ENCODE measurements at regions of chr6 and their contacts with region 1.

Region 1: DNA sequence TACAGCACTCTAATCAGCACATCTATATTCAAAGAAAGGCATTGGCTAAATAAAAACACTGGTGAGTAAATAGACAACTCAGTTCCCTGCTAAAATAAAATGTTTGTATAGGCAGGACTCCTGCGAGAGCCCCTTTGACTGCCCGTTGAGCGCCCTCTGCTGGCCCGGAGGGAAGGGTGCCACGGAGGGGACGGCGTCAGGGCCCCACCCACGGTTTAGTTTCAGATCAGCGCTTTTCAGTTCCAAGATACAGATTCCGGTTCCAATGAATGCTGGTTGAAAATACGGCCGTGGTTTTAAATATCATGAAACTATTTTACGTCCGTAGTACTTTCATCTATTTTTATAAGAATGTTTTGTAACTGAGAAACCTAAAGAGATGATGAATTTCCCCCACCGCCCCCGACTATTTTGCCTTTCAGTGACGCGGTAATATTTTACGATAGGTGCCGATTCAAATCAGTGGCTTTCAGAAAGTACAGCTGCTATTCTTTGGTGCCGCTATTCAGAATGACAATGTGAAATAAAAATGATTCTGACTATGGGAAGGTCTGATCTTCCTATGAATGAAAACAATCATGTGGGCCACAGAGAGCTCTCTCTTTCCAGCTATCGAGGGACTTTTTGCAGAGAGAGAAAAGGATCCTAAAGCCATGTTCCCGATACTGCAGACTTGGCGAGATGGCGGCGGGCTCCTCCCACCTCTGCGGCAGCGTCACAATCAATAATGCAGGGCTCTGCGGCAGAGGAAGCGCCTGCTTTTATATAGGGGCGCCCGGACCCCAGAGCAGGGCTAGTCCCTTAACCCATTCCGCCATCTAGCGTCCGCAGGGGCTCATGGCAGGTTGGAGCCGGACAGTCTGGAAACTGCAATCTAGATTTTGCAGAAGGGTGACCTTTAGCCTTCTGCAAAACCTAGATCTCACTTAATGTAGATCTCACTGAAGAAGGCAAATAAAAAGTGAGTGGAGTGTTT is 10.6 kb upstream of the CCN6 start:
- DNase-seq: peak; percentile 84 to 95 (median 91)
- ATAC-seq: peak; percentile 89 to 95 (median 90)
- H3K4me3 ChIP-seq: peak overlapping the region; percentile 63 to 80
- H3K4me3 Mint-ChIP-seq: peak overlapping the region; percentile 92 to 96 (median 96)
- H3K27ac ChIP-seq: peak overlapping the region; percentile 94
- H3K27ac Mint-ChIP-seq: peak overlapping the region; percentile 97 to 99
- H3K4me1 ChIP-seq: peaks cover 1 to 4% of the 10 kb centered on the region in 2 experiments
- H3K4me1 Mint-ChIP-seq: peaks cover 24 to 32% (median 28%) of the 10 kb centered on the region in 3 donors
- H3K27me3 ChIP-seq: no peaks in the 10 kb centered on the region
- H3K27me3 Mint-ChIP-seq: no peaks in the 10 kb centered on the region

Region 2: DNA sequence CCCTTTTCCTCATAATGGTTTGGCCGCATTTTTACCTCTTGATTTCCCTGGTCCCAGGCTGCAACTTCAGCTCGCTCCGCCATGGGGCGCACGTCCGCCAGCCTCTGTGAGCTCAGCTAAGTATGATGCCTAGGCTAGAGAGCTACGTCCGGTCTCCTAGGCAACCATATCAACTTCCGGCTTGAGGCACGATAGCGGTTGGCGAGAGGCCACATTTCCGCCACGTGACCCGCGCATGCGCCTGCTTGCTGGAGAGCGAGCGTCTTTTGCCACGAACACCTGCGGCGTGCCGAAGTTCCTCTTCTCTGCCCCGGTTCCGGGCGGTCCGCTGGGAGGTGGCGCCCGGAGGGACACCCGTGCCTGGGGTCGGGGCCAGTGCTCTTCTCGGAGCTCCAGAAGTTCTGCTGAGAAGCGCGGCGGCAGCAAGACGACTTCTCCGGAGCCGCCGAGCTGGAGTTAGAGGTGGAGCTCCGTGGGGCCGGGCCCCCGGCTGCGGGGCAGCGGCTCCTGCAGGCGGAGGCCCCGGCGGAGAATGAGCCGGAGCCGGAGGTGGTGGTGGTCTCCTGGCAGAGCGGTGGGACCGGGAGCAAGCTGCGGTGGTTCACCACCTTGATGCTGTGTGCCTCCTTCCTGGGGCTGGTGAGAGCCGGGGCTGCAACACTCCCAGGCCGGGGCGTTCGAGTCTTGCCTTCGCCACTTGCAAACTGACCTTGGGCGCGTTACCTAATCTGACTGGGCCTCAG is 784.1 kb before region 1 on chr6:
- CTCF ChIA-PET with region 1: interaction called, 8 to 32 read pairs
- POLR2A ChIA-PET with region 1: interaction called in 1 of 2 experiments, 5 read pairs
- DNase-seq: peak; percentile 95 to 100 (median 99)
- ATAC-seq: peak; percentile 96 to 98 (median 96)
- H3K4me3 ChIP-seq: peak overlapping the region; percentile 70 to 74
- H3K4me3 Mint-ChIP-seq: peak overlapping the region; percentile 66 to 85 (median 81)
- H3K27ac ChIP-seq: peak overlapping the region; percentile 85
- H3K27ac Mint-ChIP-seq: peak overlapping the region; percentile 83 to 84
- H3K4me1 ChIP-seq: peaks cover 5 to 21% of the 10 kb centered on the region in 2 experiments
- H3K4me1 Mint-ChIP-seq: peaks cover 30 to 38% (median 34%) of the 10 kb centered on the region in 3 donors
- H3K27me3 ChIP-seq: peaks cover 0 to 2% of the 10 kb centered on the region in 2 experiments
- H3K27me3 Mint-ChIP-seq: peaks cover 0 to 8% of the 10 kb centered on the region in 2 donors

Region 3: DNA sequence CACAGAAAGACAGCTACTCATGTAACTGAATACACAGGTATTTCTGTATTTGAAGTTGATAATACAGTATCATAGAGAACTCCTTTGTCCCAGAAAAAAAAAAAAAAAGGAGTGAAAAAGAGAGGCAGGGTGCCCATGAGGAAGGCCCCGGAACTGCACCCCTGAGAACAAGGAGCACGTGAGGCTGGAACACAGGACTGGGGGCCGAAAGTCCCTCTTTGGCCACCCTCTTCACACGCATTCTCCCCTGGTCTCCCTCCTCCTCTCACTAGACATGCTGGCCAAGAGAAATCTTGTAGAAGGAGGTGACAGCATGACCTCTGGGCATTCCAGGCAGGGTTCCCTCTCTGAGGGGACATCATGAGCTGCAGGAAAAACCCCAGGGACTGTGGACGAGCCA is 374.9 kb before region 1 on chr6:
- CTCF ChIA-PET with region 1: interaction called in 1 of 2 experiments, 10 read pairs
- POLR2A ChIA-PET with region 1: interaction called in 1 of 2 experiments, 8 read pairs
- DNase-seq: no peak
- ATAC-seq: no peak
- H3K4me3 ChIP-seq: no peak overlapping the region
- H3K4me3 Mint-ChIP-seq: no peak overlapping the region
- H3K27ac ChIP-seq: no peak overlapping the region
- H3K27ac Mint-ChIP-seq: no peak overlapping the region
- H3K4me1 ChIP-seq: no peaks in the 10 kb centered on the region
- H3K4me1 Mint-ChIP-seq: peaks cover 0 to 16% (median 2%) of the 10 kb centered on the region in 3 donors
- H3K27me3 ChIP-seq: no peaks in the 10 kb centered on the region
- H3K27me3 Mint-ChIP-seq: no peaks in the 10 kb centered on the region

Region 4: DNA sequence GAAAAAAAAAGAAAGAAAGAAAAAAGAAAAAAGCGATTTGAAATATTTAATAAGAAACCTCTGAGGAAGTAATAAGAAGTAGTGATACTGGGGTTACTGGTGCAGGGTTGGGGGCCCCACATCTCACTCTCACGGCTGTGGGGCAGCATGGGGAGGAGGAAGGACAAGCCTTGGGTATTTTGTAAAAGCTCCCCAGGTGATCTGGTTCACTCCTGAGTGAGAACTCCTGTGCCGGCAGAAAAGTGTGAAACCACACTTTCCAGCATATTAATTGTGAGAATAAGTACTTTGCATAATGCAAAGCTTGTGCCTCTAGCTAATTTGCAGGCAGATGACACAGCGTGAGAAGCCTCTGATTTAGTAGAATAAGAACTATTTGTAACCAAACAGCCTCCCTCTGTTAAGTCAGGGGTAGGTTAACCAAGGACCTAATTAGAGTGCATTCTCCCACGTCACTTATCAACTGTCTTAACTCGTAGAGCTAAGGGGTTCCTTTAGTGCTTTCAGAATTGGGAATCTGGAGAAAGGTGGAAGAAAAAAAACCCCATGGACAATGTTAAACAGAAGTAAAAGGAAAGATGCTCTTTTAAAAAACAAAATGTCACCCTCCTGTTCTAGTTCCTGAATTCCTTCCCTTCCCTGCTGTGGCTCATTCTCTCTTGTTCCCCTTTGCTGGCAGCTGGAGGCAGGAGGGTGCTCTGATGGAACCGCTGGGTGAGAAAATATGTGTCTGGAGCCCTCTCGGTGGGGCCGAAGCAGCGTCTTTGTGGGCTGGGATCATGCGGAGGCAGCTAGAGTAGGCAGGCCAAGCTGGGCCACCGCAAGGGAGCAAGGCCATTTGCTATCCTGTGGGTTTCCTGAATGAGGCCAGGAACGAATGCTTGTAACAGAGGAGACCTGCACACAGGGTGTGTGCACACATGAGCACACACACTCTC is 278.8 kb before region 1 on chr6:
- CTCF ChIA-PET with region 1: interaction called in 1 of 2 experiments, 14 read pairs
- POLR2A ChIA-PET with region 1: interaction called in 1 of 2 experiments, 4 read pairs
- DNase-seq: peak in 31 of 35 experiments; percentile 22 to 83 (median 48)
- ATAC-seq: peak in 3 of 4 experiments; percentile 16 to 32 (median 23)
- H3K4me3 ChIP-seq: peak overlapping the region in 1 of 2 donors; percentile 40
- H3K4me3 Mint-ChIP-seq: peak overlapping the region; percentile 59 to 95 (median 65)
- H3K27ac ChIP-seq: peak overlapping the region; percentile 98
- H3K27ac Mint-ChIP-seq: peak overlapping the region; percentile 97 to 99
- H3K4me1 ChIP-seq: peaks cover 88 to 91% of the 10 kb centered on the region in 2 experiments
- H3K4me1 Mint-ChIP-seq: peaks cover 98 to 100% (median 100%) of the 10 kb centered on the region in 3 donors
- H3K27me3 ChIP-seq: no peaks in the 10 kb centered on the region
- H3K27me3 Mint-ChIP-seq: no peaks in the 10 kb centered on the region

Region 5: GRCh38 chr6:111841822-111842221 is 201.5 kb before region 1 on chr6:
- CTCF ChIA-PET with region 1: interaction called, 10 to 19 read pairs
- POLR2A ChIA-PET with region 1: no interaction called
- DNase-seq: peak in 26 of 35 experiments; percentile 19 to 62 (median 42)
- ATAC-seq: peak in 2 of 4 experiments; percentile 17 to 18
- H3K4me3 ChIP-seq: peak overlapping the region in 1 of 2 donors; percentile 26
- H3K4me3 Mint-ChIP-seq: no peak overlapping the region
- H3K27ac ChIP-seq: peak overlapping the region; percentile 75
- H3K27ac Mint-ChIP-seq: no peak overlapping the region
- H3K4me1 ChIP-seq: peaks cover 91 to 92% of the 10 kb centered on the region in 2 experiments
- H3K4me1 Mint-ChIP-seq: no peaks in the 10 kb centered on the region
- H3K27me3 ChIP-seq: no peaks in the 10 kb centered on the region
- H3K27me3 Mint-ChIP-seq: no peaks in the 10 kb centered on the region

Region 6: DNA sequence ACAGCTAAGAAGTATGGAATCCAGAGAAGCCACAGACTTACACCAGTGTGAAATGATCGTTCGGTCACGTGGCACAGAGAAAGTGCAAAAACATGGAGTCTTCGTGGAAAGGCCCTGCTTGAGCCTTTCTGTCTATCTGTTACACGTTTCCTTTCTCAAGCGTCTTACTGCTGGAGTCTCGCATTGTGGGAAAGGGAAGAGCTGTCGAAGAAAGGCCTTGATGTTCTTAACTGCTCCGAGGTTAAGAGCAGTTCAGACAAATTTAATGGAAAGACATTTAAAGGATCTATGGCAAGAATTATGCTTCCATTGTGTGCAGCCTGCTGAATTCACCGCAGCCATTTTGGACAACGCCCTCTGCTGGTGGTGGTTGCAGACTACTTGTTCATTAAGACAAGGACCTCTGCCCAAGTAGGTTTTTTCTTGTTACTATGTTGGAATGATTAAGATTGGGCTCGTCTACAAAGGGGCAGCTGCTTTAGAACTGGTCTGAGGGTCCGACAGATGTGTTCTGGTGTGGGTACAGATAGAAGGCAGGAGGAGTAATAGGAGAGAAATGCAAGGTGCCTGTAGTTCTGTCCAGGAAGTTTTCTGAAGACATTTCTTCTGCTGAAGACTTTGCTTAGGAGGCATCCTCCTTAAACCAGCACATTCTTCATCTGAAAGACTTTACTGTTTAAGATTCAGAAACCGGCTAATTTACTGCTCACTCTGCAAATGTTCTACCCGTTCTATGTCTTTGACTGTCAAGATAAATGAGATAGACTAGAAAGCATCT is 14.1 kb before region 1 on chr6:
- CTCF ChIA-PET with region 1: interaction called, 9 to 19 read pairs
- POLR2A ChIA-PET with region 1: interaction called, 3 to 8 read pairs
- DNase-seq: peak in 31 of 35 experiments; percentile 9 to 78 (median 45)
- ATAC-seq: no peak
- H3K4me3 ChIP-seq: no peak overlapping the region
- H3K4me3 Mint-ChIP-seq: peak overlapping the region; percentile 10 to 60 (median 35)
- H3K27ac ChIP-seq: peak overlapping the region; percentile 91
- H3K27ac Mint-ChIP-seq: peak overlapping the region; percentile 99
- H3K4me1 ChIP-seq: peaks cover 53 to 65% of the 10 kb centered on the region in 2 experiments
- H3K4me1 Mint-ChIP-seq: peaks cover 69 to 80% (median 74%) of the 10 kb centered on the region in 3 donors
- H3K27me3 ChIP-seq: no peaks in the 10 kb centered on the region
- H3K27me3 Mint-ChIP-seq: no peaks in the 10 kb centered on the region

Region 7: DNA sequence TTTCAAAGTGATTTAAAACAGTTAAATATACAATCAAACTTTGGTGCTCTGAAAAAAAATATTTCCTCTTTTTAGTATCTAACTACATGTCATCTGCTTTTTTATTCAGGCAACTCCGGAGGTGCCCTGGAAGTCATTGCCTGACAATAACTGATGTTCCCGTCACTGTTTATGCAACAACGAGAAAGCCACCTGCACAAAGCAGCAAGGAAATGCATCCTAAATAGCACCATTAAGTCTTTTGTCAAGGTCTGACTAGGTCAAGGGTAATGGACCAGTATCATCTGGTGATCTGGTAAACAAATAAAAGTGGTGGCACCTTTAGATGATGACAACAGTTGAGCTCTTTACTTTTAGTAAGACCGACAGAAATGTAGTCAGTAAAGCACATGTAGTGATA is 57.2 kb after region 1 on chr6:
- CTCF ChIA-PET with region 1: no interaction called
- POLR2A ChIA-PET with region 1: no interaction called
- DNase-seq: no peak
- ATAC-seq: no peak
- H3K4me3 ChIP-seq: no peak overlapping the region
- H3K4me3 Mint-ChIP-seq: no peak overlapping the region
- H3K27ac ChIP-seq: no peak overlapping the region
- H3K27ac Mint-ChIP-seq: no peak overlapping the region
- H3K4me1 ChIP-seq: no peaks in the 10 kb centered on the region
- H3K4me1 Mint-ChIP-seq: no peaks in the 10 kb centered on the region
- H3K27me3 ChIP-seq: no peaks in the 10 kb centered on the region
- H3K27me3 Mint-ChIP-seq: peaks cover 0 to 6% of the 10 kb centered on the region in 2 donors